Motor neuron (in vitro differentiated cells): ENCODE measurements at regions of chr12 and their contacts with region 1.

Region 1: GRCh38 chr12:89352492-89353187 is at the start of gene DUSP6:
- ATAC-seq: peak; percentile 75 to 86 (median 80)
- H3K4me3 ChIP-seq: peak within 1 kb of the TSS; percentile 66 to 82 (median 77)
- H3K27ac ChIP-seq: peak within 1 kb of the TSS; percentile 88 to 95
- H3K4me1 ChIP-seq: peaks cover 28 to 42% of the 10 kb centered on the region in 2 donors
- total RNA-seq, gene DUSP6: 6.8 to 67.6 (median 22.2) TPM

Region 2: DNA sequence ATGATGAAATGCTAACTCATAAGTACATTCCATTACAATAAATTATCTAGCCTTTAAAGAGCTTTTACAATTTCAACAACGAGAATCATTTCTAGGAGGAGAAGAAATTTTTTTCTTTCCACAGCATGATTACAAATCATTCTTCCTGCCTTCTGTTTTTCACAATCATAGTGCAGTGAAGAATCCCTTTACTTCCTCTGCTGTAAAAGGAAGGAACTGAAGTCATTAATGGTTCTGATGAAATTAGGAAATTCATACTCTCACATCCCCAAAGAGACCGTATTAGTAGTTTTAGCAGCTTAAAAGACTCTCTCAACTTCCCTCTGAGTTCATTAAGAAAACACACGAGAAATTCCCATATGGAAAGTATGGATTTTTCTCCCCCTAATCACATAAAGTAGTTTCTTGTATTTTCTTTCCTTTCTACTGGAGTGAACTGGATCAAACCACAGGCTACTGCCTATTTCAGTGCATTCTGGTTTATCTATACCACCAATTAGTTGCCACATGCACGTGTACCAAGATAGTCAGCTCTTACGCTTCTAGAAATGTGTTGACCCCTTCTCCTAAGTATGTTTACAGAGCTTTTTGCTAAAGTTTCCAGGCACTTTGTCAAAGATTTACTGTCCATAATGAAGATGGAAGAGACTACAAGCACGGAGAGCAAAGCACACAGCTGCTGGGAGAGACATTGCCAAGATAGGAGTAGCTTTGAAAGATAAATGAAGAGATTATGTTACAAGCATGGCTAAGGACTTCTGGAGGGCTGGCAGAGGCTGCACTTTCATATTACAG is 713.5 kb before region 1 on chr12:
- in situ Hi-C with region 1: no loop called
- ATAC-seq: peak in 7 of 8 experiments; percentile 32 to 80 (median 58)
- H3K4me3 ChIP-seq: no peak overlapping the region
- H3K27ac ChIP-seq: no peak overlapping the region
- H3K4me1 ChIP-seq: peaks cover 7 to 8% of the 10 kb centered on the region in 2 donors

Region 3: GRCh38 chr12:88993651-88994050 is 359.0 kb before region 1 on chr12:
- in situ Hi-C with region 1: no loop called
- ATAC-seq: peak in 3 of 8 experiments; percentile 16 to 76 (median 48)
- H3K4me3 ChIP-seq: no peak overlapping the region
- H3K27ac ChIP-seq: no peak overlapping the region
- H3K4me1 ChIP-seq: no peaks in the 10 kb centered on the region

Region 4: GRCh38 chr12:89451841-89452251 is 99.2 kb after region 1 on chr12:
- in situ Hi-C with region 1: loop called in 1 of 9 experiments (anchors 10 kb)
- ATAC-seq: peak in 7 of 8 experiments; percentile 60 to 96 (median 91)
- H3K4me3 ChIP-seq: peak overlapping the region in 1 of 5 donors; percentile 6
- H3K27ac ChIP-seq: no peak overlapping the region
- H3K4me1 ChIP-seq: peaks cover 3 to 6% of the 10 kb centered on the region in 2 donors